ENCODE measurements at regions of chr1 and their contacts with region 1.

Region 1: DNA sequence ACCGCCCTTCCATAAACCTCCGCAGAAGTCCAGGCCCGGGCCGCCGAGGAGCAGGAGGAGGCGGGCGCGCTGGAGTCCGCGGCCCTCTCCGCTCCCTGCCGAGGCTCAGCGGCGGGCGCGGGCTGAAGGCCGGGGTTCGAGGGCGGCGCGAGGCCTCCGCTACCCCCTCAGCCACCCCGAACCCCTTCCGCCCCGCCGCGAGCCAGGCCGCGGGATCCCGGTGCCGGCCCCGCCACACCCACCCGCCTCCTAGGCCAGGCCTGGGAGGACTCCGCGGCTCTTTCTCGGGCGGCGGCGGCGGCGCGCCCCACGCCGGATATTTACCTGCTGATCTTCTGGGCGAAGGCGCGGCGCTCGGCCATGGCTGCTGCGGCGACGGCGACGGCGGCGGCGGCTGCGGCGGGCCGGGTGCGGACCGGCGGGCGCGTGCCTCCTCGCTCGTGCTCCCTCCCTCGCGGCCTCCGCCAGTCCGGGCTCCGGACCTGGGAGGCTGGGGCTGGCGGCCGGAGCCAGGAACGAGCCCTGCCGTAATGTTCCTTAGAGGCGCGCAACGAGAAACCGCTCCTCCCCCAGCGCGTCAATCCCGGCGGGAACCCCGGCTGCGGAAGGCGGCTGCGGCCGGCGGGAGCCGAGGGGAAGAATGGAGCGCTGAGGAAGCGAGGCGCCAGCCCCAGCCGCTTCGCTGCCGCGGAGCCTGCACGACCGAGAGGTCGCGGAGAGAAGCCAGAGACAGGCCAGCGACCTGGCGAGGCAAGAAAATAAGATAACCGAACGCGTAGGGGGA is at the start of gene DOCK7:
- DNase-seq: peak; percentile 73
- H3K4me3 ChIP-seq: peak within 1 kb of the TSS; percentile 74 to 90 (median 84)
- H3K27ac ChIP-seq: peak within 1 kb of the TSS; percentile 93
- H3K4me1 ChIP-seq: peaks cover 30% of the 10 kb centered on the region
- H3K27me3 ChIP-seq: no peaks in the 10 kb centered on the region
- CTCF ChIP-seq: no peak
- POLR2A ChIP-seq: no peak
- total RNA-seq, gene DOCK7: 31.9 and 38.8 TPM in 2 replicates

Region 2: GRCh38 chr1:62436466-62437256 is 251.4 kb before region 1 on chr1 and contains the start of gene USP1:
- CTCF ChIA-PET with region 1: no interaction called
- POLR2A ChIA-PET with region 1: no interaction called
- dilution Hi-C with region 1: no loop called
- intact Hi-C with region 1: loop called (anchors 1 kb)
- DNase-seq: peak; percentile 100
- H3K4me3 ChIP-seq: peak within 1 kb of the TSS; percentile 73 to 95 (median 78)
- H3K27ac ChIP-seq: peak within 1 kb of the TSS; percentile 89
- H3K4me1 ChIP-seq: peaks cover 13% of the 10 kb centered on the region
- H3K27me3 ChIP-seq: no peaks in the 10 kb centered on the region
- CTCF ChIP-seq: peak in 1 of 2 donors; percentile 7
- POLR2A ChIP-seq: peak; percentile 43
- total RNA-seq, gene USP1: 37.8 and 38.4 TPM in 2 replicates

Region 3: GRCh38 chr1:62530516-62531154 is 157.5 kb before region 1 on chr1:
- CTCF ChIA-PET with region 1: no interaction called
- POLR2A ChIA-PET with region 1: no interaction called
- dilution Hi-C with region 1: no loop called
- intact Hi-C with region 1: loop called (anchors 2 kb)
- DNase-seq: peak; percentile 29
- H3K4me3 ChIP-seq: no peak overlapping the region
- H3K27ac ChIP-seq: no peak overlapping the region
- H3K4me1 ChIP-seq: peaks cover 3% of the 10 kb centered on the region
- H3K27me3 ChIP-seq: no peaks in the 10 kb centered on the region
- CTCF ChIP-seq: peak; percentile 36 to 57
- POLR2A ChIP-seq: no peak

Region 4: GRCh38 chr1:62720946-62721554 is 33.0 kb after region 1 on chr1:
- CTCF ChIA-PET with region 1: interaction called, 8 read pairs
- POLR2A ChIA-PET with region 1: interaction called, 3 read pairs
- dilution Hi-C with region 1: no loop called
- intact Hi-C with region 1: loop called (anchors 1 kb)
- DNase-seq: peak; percentile 65
- H3K4me3 ChIP-seq: no peak overlapping the region
- H3K27ac ChIP-seq: no peak overlapping the region
- H3K4me1 ChIP-seq: peaks cover 7% of the 10 kb centered on the region
- H3K27me3 ChIP-seq: peaks cover 12 to 17% of the 10 kb centered on the region in 2 experiments
- CTCF ChIP-seq: no peak
- POLR2A ChIP-seq: no peak

Region 5: DNA sequence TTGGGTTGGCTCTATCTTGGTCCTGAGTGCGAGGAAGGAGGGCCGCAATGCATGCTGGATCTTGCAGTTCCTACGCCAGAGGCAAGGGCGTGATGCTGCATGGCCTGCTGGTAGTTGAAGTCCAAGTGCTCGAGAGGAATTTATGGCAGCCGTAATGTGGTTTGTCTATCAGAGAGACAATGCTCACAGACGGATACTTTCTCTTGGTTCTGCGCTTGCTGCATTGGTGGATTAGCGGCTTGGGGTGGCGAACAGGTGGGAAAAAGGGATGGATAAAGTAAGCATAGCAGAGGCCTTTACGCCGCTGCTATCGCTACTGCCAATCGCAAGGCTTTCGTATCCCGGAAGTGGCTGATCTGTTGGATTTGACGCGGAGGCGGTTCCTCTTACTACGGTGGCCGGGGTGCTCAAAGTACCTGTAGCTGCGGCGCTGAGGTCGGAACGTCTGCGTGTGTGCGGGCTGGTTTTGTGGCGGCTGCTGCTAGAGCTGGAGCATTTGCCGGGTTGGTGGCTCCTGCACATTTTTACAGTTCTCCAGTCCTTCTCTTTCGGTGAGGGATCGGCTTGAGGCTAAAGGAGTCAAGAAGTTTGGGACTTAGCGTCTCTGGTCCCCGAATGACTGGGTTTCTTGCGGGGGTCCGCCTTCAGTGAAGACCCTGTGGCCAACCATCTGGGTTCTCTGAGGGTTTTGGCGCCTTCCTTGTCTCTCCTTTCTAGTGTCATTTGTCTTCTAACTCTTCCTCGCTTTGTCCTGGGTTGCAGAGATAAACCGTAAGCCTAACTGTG is 95.8 kb after region 1 on chr1 and contains the start of gene ATG4C:
- CTCF ChIA-PET with region 1: no interaction called
- POLR2A ChIA-PET with region 1: no interaction called
- dilution Hi-C with region 1: no loop called
- intact Hi-C with region 1: loop called (anchors 2 kb)
- DNase-seq: peak; percentile 99
- H3K4me3 ChIP-seq: peak within 1 kb of the TSS; percentile 30 to 78 (median 66)
- H3K27ac ChIP-seq: peak within 1 kb of the TSS; percentile 67
- H3K4me1 ChIP-seq: peaks cover 7% of the 10 kb centered on the region
- H3K27me3 ChIP-seq: peaks cover 11 to 15% of the 10 kb centered on the region in 2 experiments
- CTCF ChIP-seq: no peak
- POLR2A ChIP-seq: peak; percentile 88
- total RNA-seq, gene ATG4C: 9.5 and 11.8 TPM in 2 replicates

Measured in endothelial cell of umbilical vein (primary cell).